Activated B cell treated with CpG ODN at 0.5 μM for 24 hours (primary cell): ENCODE measurements at regions of chr4 and their contacts with region 1.

Region 1: GRCh38 chr4:174919886-174920423 is 1.8 kb downstream of the ADAM29 start:
- DNase-seq: no peak
- ATAC-seq: no peak
- H3K4me3 Mint-ChIP-seq: no peak overlapping the region
- H3K27ac Mint-ChIP-seq: no peak overlapping the region
- H3K4me1 Mint-ChIP-seq: no peaks in the 10 kb centered on the region
- H3K27me3 Mint-ChIP-seq: no peaks in the 10 kb centered on the region
- CTCF ChIP-seq: no peak

Region 2: DNA sequence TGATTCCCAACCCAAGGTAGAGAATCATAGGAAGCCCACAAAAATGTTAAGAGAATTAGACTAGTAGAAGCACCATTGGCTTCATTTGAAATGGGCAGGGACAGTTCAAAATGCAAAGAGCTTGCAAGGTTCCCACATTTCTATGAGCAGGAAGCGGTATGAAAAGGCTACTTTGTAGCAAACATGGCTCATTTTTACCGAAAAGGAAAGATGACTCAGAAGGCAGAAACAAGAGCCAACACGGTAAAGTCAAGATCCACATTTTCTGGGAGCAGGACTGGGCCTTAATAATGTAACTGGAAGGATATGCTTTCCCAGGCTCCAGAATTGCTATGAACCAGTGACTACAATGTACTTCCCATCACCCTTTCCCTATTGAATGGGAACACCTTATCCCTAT is 180.4 kb before region 1 on chr4:
- CTCF ChIA-PET with region 1: no interaction called
- POLR2A ChIA-PET with region 1: no interaction called
- intact Hi-C with region 1: no loop called
- DNase-seq: no peak
- ATAC-seq: no peak
- H3K4me3 Mint-ChIP-seq: no peak overlapping the region
- H3K27ac Mint-ChIP-seq: no peak overlapping the region
- H3K4me1 Mint-ChIP-seq: no peaks in the 10 kb centered on the region
- H3K27me3 Mint-ChIP-seq: no peaks in the 10 kb centered on the region
- CTCF ChIP-seq: no peak

Region 3: GRCh38 chr4:175386776-175387507 is 467.0 kb after region 1 on chr4:
- CTCF ChIA-PET with region 1: no interaction called
- POLR2A ChIA-PET with region 1: no interaction called
- intact Hi-C with region 1: loop called (anchors 5 kb)
- DNase-seq: no peak
- ATAC-seq: peak; percentile 86
- H3K4me3 Mint-ChIP-seq: peak overlapping the region; percentile 44
- H3K27ac Mint-ChIP-seq: peak overlapping the region; percentile 51
- H3K4me1 Mint-ChIP-seq: peaks cover 13% of the 10 kb centered on the region
- H3K27me3 Mint-ChIP-seq: no peaks in the 10 kb centered on the region
- CTCF ChIP-seq: no peak